CD4-positive, alpha-beta memory T cell (primary cell): ENCODE measurements at regions of chr1 and their contacts with region 1.

Region 1: DNA sequence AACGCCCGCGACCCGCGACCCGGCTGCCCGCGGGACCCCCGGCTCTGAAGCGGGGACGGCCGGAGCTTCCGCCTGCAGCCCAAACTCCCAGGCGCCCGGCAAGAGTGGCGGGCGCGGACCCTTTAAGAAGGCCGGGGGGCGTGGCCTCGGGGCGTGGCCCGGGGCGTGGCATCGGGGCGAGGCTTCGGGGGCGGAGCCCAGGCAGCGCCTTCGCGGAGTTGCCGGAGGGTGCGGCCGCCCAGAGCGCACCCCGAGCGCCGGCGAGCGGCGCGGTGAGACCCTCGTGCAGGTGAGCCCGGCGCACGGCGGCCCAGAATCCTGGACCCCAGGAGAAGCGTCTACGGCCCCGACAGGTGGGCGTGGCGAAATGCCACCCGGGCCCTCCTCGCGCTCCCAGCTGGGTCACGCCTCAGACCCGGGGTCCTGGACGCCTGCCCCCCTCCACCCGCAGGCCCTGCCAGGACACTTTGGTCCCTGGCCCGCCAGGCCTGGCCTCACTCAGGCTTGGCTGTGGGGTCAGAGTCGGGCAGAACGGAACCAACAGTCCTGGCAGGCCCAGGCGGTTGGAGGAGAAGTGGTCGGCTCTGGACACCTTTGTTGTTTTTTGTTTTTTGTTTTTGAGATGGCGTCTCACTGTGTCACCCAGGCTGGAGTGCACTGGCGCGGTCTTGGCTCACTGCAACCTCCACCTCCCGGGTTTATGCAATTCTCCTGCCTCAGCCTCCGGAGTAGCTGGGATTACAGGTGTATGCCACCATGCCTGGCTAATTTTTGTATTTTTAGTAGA is 14.4 kb downstream of the RNF223 start:
- DNase-seq: peak; percentile 84 to 87 (median 87)
- H3K4me3 ChIP-seq: peak overlapping the region in 1 of 2 donors; percentile 32
- H3K4me3 Mint-ChIP-seq: peak overlapping the region in 3 of 8 donors; percentile 26 to 55 (median 36)
- H3K27ac ChIP-seq: no peak overlapping the region
- H3K27ac Mint-ChIP-seq: no peak overlapping the region
- H3K4me1 ChIP-seq: peaks cover 27% of the 10 kb centered on the region
- H3K4me1 Mint-ChIP-seq: peaks cover 2 to 12% (median 6%) of the 10 kb centered on the region in 4 donors
- H3K27me3 ChIP-seq: peaks cover 11% of the 10 kb centered on the region
- H3K27me3 Mint-ChIP-seq: peaks cover 12 to 24% of the 10 kb centered on the region in 2 donors

Region 2: GRCh38 chr1:869499-870244 is 190.0 kb before region 1 on chr1:
- CTCF ChIA-PET with region 1: no interaction called
- POLR2A ChIA-PET with region 1: no interaction called
- intact Hi-C with region 1: no loop called
- DNase-seq: peak; percentile 84 to 87 (median 84)
- H3K4me3 ChIP-seq: no peak overlapping the region
- H3K4me3 Mint-ChIP-seq: peak overlapping the region in 4 of 8 donors; percentile 24 to 36 (median 31)
- H3K27ac ChIP-seq: no peak overlapping the region
- H3K27ac Mint-ChIP-seq: no peak overlapping the region
- H3K4me1 ChIP-seq: peaks cover 4% of the 10 kb centered on the region
- H3K4me1 Mint-ChIP-seq: peaks cover 0 to 5% (median 0%) of the 10 kb centered on the region in 4 donors
- H3K27me3 ChIP-seq: no peaks in the 10 kb centered on the region
- H3K27me3 Mint-ChIP-seq: peaks cover 16 to 23% of the 10 kb centered on the region in 2 donors

Region 3: DNA sequence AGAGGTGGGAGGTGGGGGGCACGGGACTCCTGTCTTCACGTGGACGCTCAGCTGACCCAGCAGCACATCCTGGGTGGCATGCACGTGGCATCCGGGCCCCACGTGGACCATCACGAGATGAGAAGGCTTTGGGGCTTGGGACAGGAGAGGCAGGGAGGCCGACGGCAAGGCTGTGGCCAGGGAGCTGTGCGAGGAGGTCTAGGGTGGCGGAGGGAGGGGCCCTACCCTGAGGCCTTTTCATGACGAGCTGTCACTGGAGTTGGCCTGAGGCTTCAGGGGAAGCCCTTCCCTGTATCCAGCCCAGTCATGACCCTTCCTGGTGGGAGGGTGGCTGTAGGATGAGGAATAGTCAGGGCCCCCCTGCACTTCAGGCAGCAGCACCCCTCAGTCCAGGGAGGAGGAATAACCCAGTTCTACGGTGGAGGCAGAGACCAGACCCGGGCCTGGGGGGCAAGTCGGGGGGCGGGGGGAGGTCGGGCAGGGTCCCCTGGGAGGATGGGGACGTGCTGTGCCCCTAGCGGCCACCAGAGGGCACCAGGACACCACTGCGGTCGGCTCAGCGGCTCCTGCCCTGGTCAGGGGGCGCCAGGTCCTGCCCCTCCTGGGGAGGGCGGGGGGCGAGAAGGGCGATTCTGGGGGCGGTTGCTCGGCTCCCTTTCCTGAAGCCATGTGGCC is 75.8 kb before region 1 on chr1:
- CTCF ChIA-PET with region 1: interaction called, 65 read pairs
- POLR2A ChIA-PET with region 1: no interaction called
- intact Hi-C with region 1: loop called (anchors 1 kb)
- DNase-seq: peak in 4 of 5 donors; percentile 40 to 63 (median 47)
- H3K4me3 ChIP-seq: no peak overlapping the region
- H3K4me3 Mint-ChIP-seq: no peak overlapping the region
- H3K27ac ChIP-seq: no peak overlapping the region
- H3K27ac Mint-ChIP-seq: no peak overlapping the region
- H3K4me1 ChIP-seq: no peaks in the 10 kb centered on the region
- H3K4me1 Mint-ChIP-seq: no peaks in the 10 kb centered on the region
- H3K27me3 ChIP-seq: no peaks in the 10 kb centered on the region
- H3K27me3 Mint-ChIP-seq: peaks cover 18 to 27% of the 10 kb centered on the region in 2 donors

Region 4: GRCh38 chr1:1019122-1019999 is 40.3 kb before region 1 on chr1:
- CTCF ChIA-PET with region 1: interaction called, 15 read pairs
- POLR2A ChIA-PET with region 1: interaction called, 3 read pairs
- intact Hi-C with region 1: loop called (anchors 5 kb)
- DNase-seq: peak; percentile 67 to 81 (median 74)
- H3K4me3 ChIP-seq: peak overlapping the region in 1 of 2 donors; percentile 43
- H3K4me3 Mint-ChIP-seq: peak overlapping the region; percentile 29 to 67 (median 52)
- H3K27ac ChIP-seq: no peak overlapping the region
- H3K27ac Mint-ChIP-seq: peak overlapping the region in 3 of 7 donors; percentile 7 to 75 (median 29)
- H3K4me1 ChIP-seq: peaks cover 19% of the 10 kb centered on the region
- H3K4me1 Mint-ChIP-seq: peaks cover 4 to 24% (median 14%) of the 10 kb centered on the region in 4 donors
- H3K27me3 ChIP-seq: no peaks in the 10 kb centered on the region
- H3K27me3 Mint-ChIP-seq: peaks cover 2 to 4% of the 10 kb centered on the region in 2 donors

Region 5: GRCh38 chr1:1033009-1033587 is 26.6 kb before region 1 on chr1:
- CTCF ChIA-PET with region 1: no interaction called
- POLR2A ChIA-PET with region 1: interaction called, 4 read pairs
- intact Hi-C with region 1: loop called (anchors 1 kb)
- DNase-seq: peak; percentile 70 to 88 (median 74)
- H3K4me3 ChIP-seq: peak overlapping the region in 1 of 2 donors; percentile 38
- H3K4me3 Mint-ChIP-seq: peak overlapping the region in 6 of 8 donors; percentile 41 to 70 (median 61)
- H3K27ac ChIP-seq: no peak overlapping the region
- H3K27ac Mint-ChIP-seq: no peak overlapping the region
- H3K4me1 ChIP-seq: peaks cover 12% of the 10 kb centered on the region
- H3K4me1 Mint-ChIP-seq: peaks cover 0 to 8% (median 3%) of the 10 kb centered on the region in 4 donors
- H3K27me3 ChIP-seq: peaks cover 12% of the 10 kb centered on the region
- H3K27me3 Mint-ChIP-seq: peaks cover 13 to 16% of the 10 kb centered on the region in 2 donors

Region 6: GRCh38 chr1:1250786-1251284 is 191.1 kb after region 1 on chr1:
- CTCF ChIA-PET with region 1: no interaction called
- POLR2A ChIA-PET with region 1: no interaction called
- intact Hi-C with region 1: no loop called
- DNase-seq: peak; percentile 61 to 85 (median 73)
- H3K4me3 ChIP-seq: peak overlapping the region in 1 of 2 donors; percentile 10
- H3K4me3 Mint-ChIP-seq: peak overlapping the region; percentile 36 to 88 (median 75)
- H3K27ac ChIP-seq: peak overlapping the region; percentile 59
- H3K27ac Mint-ChIP-seq: peak overlapping the region; percentile 76 to 96 (median 94)
- H3K4me1 ChIP-seq: peaks cover 15% of the 10 kb centered on the region
- H3K4me1 Mint-ChIP-seq: peaks cover 4 to 24% (median 14%) of the 10 kb centered on the region in 4 donors
- H3K27me3 ChIP-seq: peaks cover 4% of the 10 kb centered on the region
- H3K27me3 Mint-ChIP-seq: no peaks in the 10 kb centered on the region